ENCODE measurements at regions of chr17 and their contacts with region 1.

Region 1: DNA sequence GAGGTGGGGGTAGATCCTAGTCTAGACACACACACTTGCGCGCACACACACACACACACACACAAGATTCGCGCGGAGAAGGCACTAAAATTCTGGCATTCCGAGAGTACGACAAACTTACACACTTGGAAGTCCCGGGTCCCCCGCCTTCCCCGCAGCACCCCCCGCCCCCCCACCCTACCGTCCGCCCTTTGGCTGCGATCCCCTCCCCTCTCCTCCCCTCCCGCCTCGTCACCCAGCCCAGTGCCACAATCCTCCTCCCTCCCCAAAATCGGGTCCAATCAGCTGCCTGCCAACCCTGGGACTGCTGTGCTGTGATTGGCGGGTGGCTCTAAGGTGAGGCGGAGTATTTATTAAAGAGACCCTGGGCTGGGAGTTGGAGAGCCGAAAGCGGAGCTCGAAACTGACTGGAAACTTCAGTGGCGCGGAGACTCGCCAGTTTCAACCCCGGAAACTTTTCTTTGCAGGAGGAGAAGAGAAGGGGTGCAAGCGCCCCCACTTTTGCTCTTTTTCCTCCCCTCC is at the start of gene SOX9:
- DNase-seq: peak; percentile 96
- H3K4me3 ChIP-seq: peak within 1 kb of the TSS; percentile 94
- H3K27ac ChIP-seq: peak within 1 kb of the TSS; percentile 70
- H3K4me1 ChIP-seq: peaks cover 19% of the 10 kb centered on the region
- H3K27me3 ChIP-seq: no peaks in the 10 kb centered on the region
- total RNA-seq, gene SOX9: 13.8 and 16.6 TPM in 2 replicates

Region 2: DNA sequence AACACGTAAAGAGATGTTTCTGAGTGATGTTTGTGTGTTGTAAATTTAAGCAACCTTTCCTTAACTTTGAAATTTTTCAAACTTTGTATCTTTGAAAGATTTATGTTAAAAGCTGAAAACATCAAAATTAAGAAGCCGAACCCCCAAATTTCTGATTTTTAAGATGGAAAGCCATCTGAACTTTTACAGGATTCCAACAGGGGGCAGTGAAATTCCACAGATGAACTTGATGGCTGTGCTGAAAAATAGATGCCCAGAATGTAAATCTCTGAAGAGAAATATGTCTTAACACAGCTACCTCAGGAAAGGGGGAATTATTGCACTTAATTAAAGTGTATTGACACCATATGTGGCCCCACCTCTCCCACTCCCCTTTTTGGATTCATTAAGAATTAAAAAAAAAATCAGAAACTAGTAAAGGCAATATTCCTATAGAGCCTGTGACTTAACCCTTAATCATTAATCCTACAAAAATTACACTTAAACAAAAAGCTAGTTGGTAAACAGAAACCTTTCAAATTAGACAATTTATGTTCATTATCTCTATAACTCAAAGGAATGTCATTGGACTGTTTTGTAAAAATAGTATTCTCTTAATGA is 1353.5 kb before region 1 on chr17:
- in situ Hi-C with region 1: loop called (anchors 25 kb)
- DNase-seq: peak; percentile 61
- H3K4me3 ChIP-seq: no peak overlapping the region
- H3K27ac ChIP-seq: no peak overlapping the region
- H3K4me1 ChIP-seq: no peaks in the 10 kb centered on the region
- H3K27me3 ChIP-seq: no peaks in the 10 kb centered on the region

Region 3: DNA sequence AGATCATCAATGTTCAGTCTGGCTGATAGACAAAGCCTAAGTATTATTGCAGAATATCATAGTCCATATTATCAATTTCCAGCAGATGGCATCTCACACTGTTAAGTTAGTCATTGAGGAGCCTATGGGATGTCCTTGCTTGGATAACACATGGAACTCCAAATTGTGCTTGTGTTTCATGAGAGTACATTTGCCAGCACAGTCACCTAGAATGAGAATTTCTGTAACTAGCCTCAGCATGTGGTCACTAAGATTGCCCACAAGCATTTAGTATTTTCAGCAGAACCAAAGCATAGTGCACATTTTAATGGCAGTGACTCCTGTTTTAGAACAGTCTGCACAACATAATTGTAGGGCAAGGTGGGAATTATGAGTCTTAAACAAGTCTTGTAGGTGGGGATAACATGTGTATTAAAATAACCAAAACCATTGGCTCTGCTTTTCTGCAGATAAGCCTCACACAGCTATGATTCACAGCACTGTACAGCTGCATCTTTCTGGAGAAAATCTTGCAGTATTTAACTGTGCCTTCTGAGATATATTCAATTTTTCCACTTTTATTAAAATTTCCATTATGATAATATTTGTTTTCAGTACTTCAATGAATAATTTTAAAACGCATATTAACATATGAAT is 882.7 kb before region 1 on chr17:
- in situ Hi-C with region 1: loop called (anchors 10 kb)
- DNase-seq: peak; percentile 81
- H3K4me3 ChIP-seq: no peak overlapping the region
- H3K27ac ChIP-seq: no peak overlapping the region
- H3K4me1 ChIP-seq: peaks cover 7% of the 10 kb centered on the region; the same call in 1 of the 2 replicates
- H3K27me3 ChIP-seq: no peaks in the 10 kb centered on the region

Region 4: DNA sequence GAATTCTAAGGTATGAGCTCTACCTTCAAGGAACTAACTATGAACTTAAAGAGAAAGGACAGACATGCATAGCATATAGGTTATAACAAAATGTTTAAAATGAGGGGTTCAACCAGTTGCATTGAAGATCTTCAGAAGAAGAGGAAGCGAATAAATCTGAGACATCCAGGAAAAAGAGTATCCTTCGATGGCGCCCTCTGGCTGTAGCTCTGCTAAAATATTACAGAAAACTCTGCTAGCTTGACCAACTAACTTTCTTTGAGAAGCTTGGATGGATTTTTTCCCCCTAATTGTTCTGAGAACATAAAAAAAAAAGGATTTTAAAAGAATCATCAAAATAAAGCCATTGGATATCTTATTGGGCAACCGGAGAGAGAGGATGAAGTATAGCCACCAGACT is 659.8 kb before region 1 on chr17:
- in situ Hi-C with region 1: loop called (anchors 10 kb)
- DNase-seq: peak; percentile 61
- H3K4me3 ChIP-seq: no peak overlapping the region
- H3K27ac ChIP-seq: no peak overlapping the region
- H3K4me1 ChIP-seq: no peaks in the 10 kb centered on the region
- H3K27me3 ChIP-seq: no peaks in the 10 kb centered on the region

Region 5: GRCh38 chr17:72705905-72706395 is 585.2 kb after region 1 on chr17:
- in situ Hi-C with region 1: no loop called
- DNase-seq: no peak
- H3K4me3 ChIP-seq: no peak overlapping the region
- H3K27ac ChIP-seq: no peak overlapping the region
- H3K4me1 ChIP-seq: no peaks in the 10 kb centered on the region
- H3K27me3 ChIP-seq: no peaks in the 10 kb centered on the region